ENCODE measurements at regions of chr16 and their contacts with region 1.

Region 1: DNA sequence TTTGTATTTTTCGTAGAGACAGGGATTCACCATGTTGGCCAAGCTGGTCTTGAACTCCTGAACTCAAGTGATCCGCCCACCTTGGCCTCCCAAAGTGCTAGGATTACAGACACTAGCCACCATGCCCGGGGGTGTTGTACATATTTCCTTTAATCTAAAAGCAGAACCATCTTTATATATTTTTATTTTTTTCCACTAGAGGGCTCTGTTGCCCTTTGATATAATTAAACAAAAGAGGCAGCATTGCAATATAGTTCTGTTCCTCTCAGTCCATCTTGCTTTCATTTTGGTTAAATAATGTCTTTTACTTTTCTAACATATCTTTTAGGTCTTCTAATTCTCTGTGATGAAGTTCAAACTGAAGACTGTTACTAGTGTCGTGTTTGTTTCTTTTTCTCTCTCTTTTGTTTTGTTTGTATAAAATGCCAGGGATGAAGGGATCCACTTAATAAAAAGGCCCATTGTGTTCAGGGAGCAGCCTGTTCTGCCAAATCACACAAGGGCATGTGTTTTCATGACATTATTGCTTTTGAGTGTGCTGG is 23.4 kb downstream of the WWOX start:
- DNase-seq: no peak
- ATAC-seq: peak in 7 of 8 donors; percentile 67 to 84 (median 72)
- H3K4me3 ChIP-seq: no peak overlapping the region
- H3K27ac ChIP-seq: peak overlapping the region in 5 of 10 donors; percentile 1 to 46 (median 31)
- H3K4me1 ChIP-seq: peaks cover 0 to 26% (median 15%) of the 10 kb centered on the region in 9 donors
- H3K27me3 ChIP-seq: no peaks in the 10 kb centered on the region
- CTCF ChIP-seq: peak in 8 of 9 donors; percentile 46 to 74 (median 58)

Region 2: DNA sequence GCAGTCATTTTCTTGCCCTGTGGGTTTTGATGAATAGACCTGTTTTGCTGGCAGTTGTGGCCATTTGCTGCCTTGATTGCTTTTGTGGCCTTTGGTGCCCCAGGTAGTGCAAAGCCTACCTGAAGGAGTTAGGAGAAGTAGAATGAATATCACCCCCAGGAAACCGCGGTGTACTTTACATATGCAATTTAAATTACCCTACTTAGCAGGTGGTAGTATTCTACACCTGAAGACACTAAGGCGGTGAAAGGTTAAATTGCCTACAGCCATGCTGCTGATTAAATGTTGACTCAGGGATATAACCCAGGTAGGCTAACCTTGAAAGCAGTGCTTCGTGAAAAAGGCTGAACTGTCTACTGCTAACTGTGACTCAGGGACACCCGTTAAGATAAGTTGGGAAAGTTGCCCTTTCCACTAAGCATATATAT is 50.6 kb before region 1 on chr16:
- intact Hi-C with region 1: no loop called
- DNase-seq: no peak
- ATAC-seq: no peak
- H3K4me3 ChIP-seq: no peak overlapping the region
- H3K27ac ChIP-seq: no peak overlapping the region
- H3K4me1 ChIP-seq: no peaks in the 10 kb centered on the region
- H3K27me3 ChIP-seq: peaks cover 0 to 35% (median 5%) of the 10 kb centered on the region in 7 donors
- CTCF ChIP-seq: no peak

Region 3: DNA sequence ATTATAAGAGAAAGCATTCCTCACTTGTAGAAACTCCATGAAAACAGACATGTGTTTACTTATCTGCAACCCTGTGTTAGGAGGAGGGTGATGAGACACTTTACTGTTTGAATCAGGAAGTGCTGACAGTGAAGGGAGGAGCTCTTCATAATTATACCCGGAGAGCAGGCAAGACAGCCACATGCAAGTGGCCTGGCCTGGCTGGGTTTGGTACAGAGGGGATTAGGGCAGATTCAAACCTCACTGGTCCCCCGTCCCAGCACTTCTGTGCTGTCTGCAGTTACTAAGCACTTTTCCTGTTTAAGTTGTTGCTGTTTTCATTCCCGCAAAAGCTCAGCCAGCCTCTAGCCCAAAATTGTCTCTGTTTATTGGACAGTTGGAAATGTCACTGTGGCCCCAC is 55.1 kb after region 1 on chr16:
- intact Hi-C with region 1: no loop called
- DNase-seq: no peak
- ATAC-seq: peak in 1 of 8 donors; percentile 47
- H3K4me3 ChIP-seq: no peak overlapping the region
- H3K27ac ChIP-seq: no peak overlapping the region
- H3K4me1 ChIP-seq: peaks cover 0 to 9% (median 0%) of the 10 kb centered on the region in 9 donors
- H3K27me3 ChIP-seq: no peaks in the 10 kb centered on the region
- CTCF ChIP-seq: no peak

Region 4: GRCh38 chr16:78216166-78216740 is 93.4 kb after region 1 on chr16:
- intact Hi-C with region 1: no loop called
- DNase-seq: no peak
- ATAC-seq: no peak
- H3K4me3 ChIP-seq: no peak overlapping the region
- H3K27ac ChIP-seq: no peak overlapping the region
- H3K4me1 ChIP-seq: no peaks in the 10 kb centered on the region
- H3K27me3 ChIP-seq: no peaks in the 10 kb centered on the region
- CTCF ChIP-seq: no peak

Region 5: DNA sequence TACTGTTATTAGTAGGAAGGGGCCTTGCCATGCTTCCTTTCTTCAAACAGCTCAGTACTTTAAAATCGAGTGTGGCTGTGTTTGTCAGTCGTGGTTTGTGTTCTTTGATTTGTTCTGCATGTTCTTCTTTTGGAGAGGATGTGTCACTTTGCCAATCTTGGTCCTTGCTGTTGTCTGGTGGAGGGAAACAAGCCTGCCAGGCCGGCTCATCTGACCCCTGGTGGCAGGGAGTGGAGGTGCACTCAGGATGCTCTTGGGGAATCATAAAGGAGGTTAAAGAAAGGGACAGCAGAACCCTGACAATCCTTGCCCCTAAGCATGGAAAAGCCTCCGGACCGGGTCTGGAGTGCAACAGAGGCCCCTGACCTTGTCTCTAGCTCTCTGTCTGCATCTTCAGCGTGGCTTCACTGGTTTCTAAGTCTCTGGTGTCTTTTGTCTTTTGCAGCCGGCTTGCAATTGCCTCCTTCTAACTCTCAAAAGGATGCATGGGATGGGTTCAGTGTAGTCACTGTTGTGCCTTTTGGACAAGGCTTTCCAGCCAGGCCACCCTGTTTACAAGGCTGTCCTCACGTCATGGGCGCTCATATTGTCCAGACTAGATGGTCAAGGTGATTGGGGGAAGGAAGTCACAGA is 112.4 kb after region 1 on chr16:
- intact Hi-C with region 1: loop called in 9 of 10 experiments (anchors 1 to 5 kb)
- DNase-seq: peak; percentile 64 to 71
- ATAC-seq: peak in 7 of 8 donors; percentile 53 to 79 (median 68)
- H3K4me3 ChIP-seq: no peak overlapping the region
- H3K27ac ChIP-seq: no peak overlapping the region
- H3K4me1 ChIP-seq: peaks cover 0 to 20% (median 6%) of the 10 kb centered on the region in 9 donors
- H3K27me3 ChIP-seq: no peaks in the 10 kb centered on the region
- CTCF ChIP-seq: peak; percentile 79 to 93 (median 89)

Region 6: GRCh38 chr16:78437352-78437968 is 314.6 kb after region 1 on chr16:
- intact Hi-C with region 1: loop called in 6 of 10 experiments (anchors 2 to 10 kb)
- DNase-seq: peak in 1 of 2 donors; percentile 19
- ATAC-seq: no peak
- H3K4me3 ChIP-seq: no peak overlapping the region
- H3K27ac ChIP-seq: no peak overlapping the region
- H3K4me1 ChIP-seq: no peaks in the 10 kb centered on the region
- H3K27me3 ChIP-seq: no peaks in the 10 kb centered on the region
- CTCF ChIP-seq: peak; percentile 65 to 95 (median 85)

Region 7: GRCh38 chr16:78770353-78771091 is 647.7 kb after region 1 on chr16:
- intact Hi-C with region 1: loop called in 1 of 10 experiments (anchors 5 kb)
- DNase-seq: peak; percentile 70 to 79
- ATAC-seq: peak; percentile 61 to 90 (median 84)
- H3K4me3 ChIP-seq: no peak overlapping the region
- H3K27ac ChIP-seq: peak overlapping the region in 3 of 10 donors; percentile 33 to 52 (median 50)
- H3K4me1 ChIP-seq: peaks cover 0 to 16% (median 7%) of the 10 kb centered on the region in 9 donors
- H3K27me3 ChIP-seq: no peaks in the 10 kb centered on the region
- CTCF ChIP-seq: peak; percentile 77 to 92 (median 87)

Region 8: GRCh38 chr16:78972986-78973385 is 850.1 kb after region 1 on chr16:
- intact Hi-C with region 1: loop called in 1 of 10 experiments (anchors 5 kb)
- DNase-seq: no peak
- ATAC-seq: no peak
- H3K4me3 ChIP-seq: peak overlapping the region in 3 of 10 donors; percentile 0 to 16 (median 13)
- H3K27ac ChIP-seq: no peak overlapping the region
- H3K4me1 ChIP-seq: peaks cover 0 to 6% (median 0%) of the 10 kb centered on the region in 9 donors
- H3K27me3 ChIP-seq: no peaks in the 10 kb centered on the region
- CTCF ChIP-seq: no peak

Region 9: DNA sequence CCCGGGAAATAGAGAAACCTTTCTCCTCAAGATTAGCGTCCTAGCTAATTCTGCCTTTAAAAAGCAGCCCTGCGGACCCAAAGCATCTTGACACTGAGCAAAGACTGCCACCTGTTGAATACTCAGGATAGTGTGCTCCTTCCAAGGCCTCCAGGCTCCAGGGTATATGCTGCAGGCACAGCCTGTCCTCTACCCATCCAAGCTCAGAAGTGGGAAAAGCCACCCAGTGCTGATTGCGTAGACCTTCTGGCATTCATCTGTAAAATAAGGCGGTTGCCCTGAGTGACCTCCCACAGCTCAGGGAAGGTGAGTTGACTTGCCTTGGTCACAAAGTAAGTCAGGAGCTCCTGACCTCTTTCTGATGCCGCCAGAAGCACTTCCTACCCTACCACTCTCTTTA is 1961.8 kb after region 1 on chr16:
- intact Hi-C with region 1: loop called in 1 of 10 experiments (anchors 10 kb)
- DNase-seq: peak; percentile 10 to 46
- ATAC-seq: peak; percentile 59 to 97 (median 90)
- H3K4me3 ChIP-seq: no peak overlapping the region
- H3K27ac ChIP-seq: no peak overlapping the region
- H3K4me1 ChIP-seq: peaks cover 0 to 4% (median 0%) of the 10 kb centered on the region in 9 donors
- H3K27me3 ChIP-seq: no peaks in the 10 kb centered on the region
- CTCF ChIP-seq: peak; percentile 37 to 74 (median 66)

Measured in heart right ventricle (tissue), 16 donors.